Activated CD8-positive, alpha-beta T cell treated with anti-CD3 and anti-CD28 coated beads, Interleukin-2, amount 10 ng/mL, durations not matched to agents 7 days and 5 days (primary cell): ENCODE measurements at regions of chr6 and their contacts with region 1.

Region 1: GRCh38 chr6:41705996-41706835 is 29.2 kb downstream of the TFEB start:
- DNase-seq: peak; percentile 84
- ATAC-seq: peak; percentile 87
- H3K4me3 Mint-ChIP-seq: no peak overlapping the region
- H3K27ac Mint-ChIP-seq: peak overlapping the region; percentile 93
- H3K4me1 Mint-ChIP-seq: peaks cover 41% of the 10 kb centered on the region
- H3K27me3 Mint-ChIP-seq: no peaks in the 10 kb centered on the region

Region 2: DNA sequence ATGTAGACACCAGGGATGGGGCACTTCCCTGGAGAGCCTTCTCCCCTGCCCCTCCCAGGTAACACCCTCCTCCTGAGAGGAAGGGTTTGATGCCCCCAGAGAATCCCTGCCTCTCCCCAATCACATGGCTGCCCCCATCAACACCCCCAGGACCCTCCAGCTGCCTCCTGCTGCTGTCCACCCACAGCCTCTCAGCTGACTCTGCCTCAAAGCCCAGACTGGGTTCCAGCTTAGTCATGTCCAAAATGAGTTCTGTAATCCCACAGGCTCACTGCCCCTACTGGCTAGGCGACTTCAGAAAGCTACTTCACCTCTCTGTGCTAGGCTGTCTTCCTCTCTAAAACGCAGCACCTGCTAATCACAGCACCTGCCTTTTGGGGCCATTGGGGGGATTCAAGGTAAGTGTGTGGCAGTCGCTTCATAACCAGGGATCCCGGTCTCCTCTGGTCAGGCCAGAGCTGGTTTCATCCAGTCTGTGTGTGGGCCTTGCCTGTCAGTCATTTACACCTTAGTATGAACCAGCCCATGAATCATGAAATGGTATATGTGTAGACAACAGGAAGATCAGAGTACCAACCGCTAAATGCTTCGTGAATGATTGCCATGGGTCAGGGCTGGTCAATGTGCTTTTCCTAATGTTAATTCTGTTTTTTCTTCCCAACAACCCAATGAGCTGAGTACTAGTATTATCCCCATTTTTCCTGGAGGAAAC is 11.2 kb before region 1 on chr6:
- CTCF ChIA-PET with region 1: no interaction called
- POLR2A ChIA-PET with region 1: no interaction called
- DNase-seq: no peak
- ATAC-seq: no peak
- H3K4me3 Mint-ChIP-seq: no peak overlapping the region
- H3K27ac Mint-ChIP-seq: no peak overlapping the region
- H3K4me1 Mint-ChIP-seq: no peaks in the 10 kb centered on the region
- H3K27me3 Mint-ChIP-seq: no peaks in the 10 kb centered on the region

Region 3: DNA sequence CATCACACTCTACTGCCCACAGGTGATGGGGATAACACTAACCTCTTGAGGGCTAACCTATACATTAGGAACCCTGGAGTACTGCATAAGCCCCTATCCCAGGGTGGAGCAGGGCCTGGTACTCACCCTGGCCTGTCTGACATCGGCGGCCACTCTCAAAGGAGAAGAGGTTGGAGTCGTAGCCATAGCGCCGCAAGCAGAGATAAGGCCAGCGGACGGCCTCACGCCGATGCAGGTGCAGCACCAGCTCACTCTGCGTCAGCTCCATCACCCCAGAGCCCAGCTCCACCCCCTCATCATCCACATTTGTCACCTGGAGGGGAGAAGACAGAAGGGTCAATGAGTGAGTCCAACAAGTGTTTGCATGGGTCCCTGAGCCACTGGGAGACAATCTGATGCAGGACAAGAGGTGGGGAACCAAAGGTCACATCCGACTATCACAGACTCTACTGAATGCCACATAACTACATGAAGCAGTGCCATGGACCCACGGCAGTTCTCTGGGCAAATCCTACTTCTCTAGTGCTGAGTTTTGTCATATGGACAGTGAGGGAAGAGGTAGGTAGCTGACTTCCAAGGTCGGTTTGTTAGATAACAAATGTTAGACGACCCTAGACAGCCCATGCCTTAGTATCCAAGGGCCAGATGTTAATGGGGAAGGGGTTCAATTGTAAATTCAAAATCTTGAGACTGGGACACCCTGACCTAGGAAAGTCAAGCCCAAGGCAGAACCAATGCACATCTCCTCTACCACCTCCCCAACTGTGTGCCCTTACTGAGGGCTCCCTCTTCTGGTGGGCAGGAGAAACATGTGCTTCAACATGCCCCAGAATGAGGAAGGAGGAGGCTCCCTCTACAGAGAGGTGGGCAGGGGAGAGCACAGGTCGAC is 69.3 kb after region 1 on chr6:
- CTCF ChIA-PET with region 1: interaction called, 23 read pairs
- POLR2A ChIA-PET with region 1: no interaction called
- DNase-seq: peak; percentile 69
- ATAC-seq: peak; percentile 48
- H3K4me3 Mint-ChIP-seq: no peak overlapping the region
- H3K27ac Mint-ChIP-seq: no peak overlapping the region
- H3K4me1 Mint-ChIP-seq: peaks cover 9% of the 10 kb centered on the region
- H3K27me3 Mint-ChIP-seq: peaks cover 2% of the 10 kb centered on the region